ENCODE measurements at regions of chr18 and their contacts with region 1.

Region 1: DNA sequence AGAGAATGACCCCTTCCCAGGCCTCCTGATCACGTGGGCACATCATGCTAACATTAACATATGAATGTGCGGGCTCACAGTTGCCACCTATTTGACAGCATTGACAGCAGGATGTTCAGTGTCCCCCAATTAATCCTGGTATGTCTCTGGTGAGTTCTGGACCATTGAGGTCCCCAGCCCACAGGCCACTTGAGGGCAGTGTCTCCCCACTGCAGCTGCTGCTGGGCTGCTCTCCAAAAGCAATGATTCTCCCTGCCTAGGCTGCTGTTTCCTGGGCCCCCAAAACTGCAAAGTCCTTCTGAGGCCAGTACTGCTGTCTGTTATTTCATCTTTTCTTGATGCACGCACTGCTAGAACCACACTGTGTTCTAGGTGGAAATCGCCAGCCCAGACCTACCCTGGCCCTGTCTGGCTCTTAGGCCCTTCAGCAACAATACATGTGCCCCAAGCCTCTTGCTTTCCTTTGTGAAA is 52.7 kb upstream of the MAPK4 start:
- DNase-seq: peak; percentile 80

Region 2: GRCh38 chr18:50465201-50466153 is 41.7 kb before region 1 on chr18:
- intact Hi-C with region 1: loop called in 1 of 2 experiments (anchors 1 kb)
- DNase-seq: no peak

Region 3: DNA sequence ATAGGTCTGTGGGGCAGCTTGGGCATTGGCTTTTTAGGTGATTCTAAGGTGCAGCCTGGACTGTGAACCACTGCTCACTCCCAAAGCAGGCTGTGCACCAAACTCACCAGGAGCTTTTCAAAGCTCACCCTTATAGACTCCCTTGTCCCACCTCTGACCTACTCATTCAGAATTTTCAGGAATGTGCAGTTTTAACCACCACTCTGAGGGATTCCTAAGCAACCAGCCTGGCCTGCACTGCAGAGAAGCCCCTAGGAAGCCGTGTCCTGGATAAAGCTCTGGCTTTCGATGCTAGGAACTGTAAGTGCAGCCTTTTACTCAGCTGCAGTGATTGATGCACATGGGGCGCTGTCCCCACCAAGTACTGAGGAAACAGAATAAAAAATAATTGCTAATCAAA is 279.7 kb after region 1 on chr18:
- intact Hi-C with region 1: loop called (anchors 2 to 10 kb)
- DNase-seq: no peak

Region 4: DNA sequence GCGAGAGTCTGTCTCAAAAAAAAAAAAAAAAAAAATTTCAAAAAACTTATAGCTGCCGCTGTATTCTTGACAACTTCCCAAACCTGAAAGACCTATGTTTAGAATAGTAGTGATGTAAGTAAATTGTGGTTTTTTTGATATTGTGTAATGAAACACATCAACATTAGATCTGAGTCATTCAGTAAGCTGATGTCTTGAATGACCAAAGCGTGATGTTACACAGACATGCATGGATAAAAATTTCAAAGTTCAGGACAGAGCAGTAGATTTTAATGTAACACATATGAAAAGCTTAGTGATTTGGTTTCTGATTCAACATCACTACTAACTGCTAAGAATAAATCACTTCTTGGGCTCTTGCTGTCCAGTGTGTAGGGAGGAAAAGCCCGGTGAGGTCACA is 759.6 kb after region 1 on chr18:
- intact Hi-C with region 1: no loop called
- DNase-seq: no peak